ENCODE measurements at regions of chr16 and their contacts with region 1.

Region 1: GRCh38 chr16:79047229-79047983 is 553.1 kb downstream of the MAF start:
- DNase-seq: no peak
- H3K4me3 ChIP-seq: no peak overlapping the region
- H3K27ac ChIP-seq: no peak overlapping the region
- H3K4me1 ChIP-seq: peaks cover 0 to 7% (median 1%) of the 10 kb centered on the region in 4 experiments; a peak in 3 of 7 replicates
- H3K27me3 ChIP-seq: no peaks in the 10 kb centered on the region
- CTCF ChIP-seq: peak in 2 of 3 experiments; percentile 55 to 67; a peak in 3 of 4 replicates
- EP300 ChIP-seq: no peak
- POLR2A ChIP-seq: no peak
- RAD21 ChIP-seq: peak; percentile 44 to 63

Region 2: DNA sequence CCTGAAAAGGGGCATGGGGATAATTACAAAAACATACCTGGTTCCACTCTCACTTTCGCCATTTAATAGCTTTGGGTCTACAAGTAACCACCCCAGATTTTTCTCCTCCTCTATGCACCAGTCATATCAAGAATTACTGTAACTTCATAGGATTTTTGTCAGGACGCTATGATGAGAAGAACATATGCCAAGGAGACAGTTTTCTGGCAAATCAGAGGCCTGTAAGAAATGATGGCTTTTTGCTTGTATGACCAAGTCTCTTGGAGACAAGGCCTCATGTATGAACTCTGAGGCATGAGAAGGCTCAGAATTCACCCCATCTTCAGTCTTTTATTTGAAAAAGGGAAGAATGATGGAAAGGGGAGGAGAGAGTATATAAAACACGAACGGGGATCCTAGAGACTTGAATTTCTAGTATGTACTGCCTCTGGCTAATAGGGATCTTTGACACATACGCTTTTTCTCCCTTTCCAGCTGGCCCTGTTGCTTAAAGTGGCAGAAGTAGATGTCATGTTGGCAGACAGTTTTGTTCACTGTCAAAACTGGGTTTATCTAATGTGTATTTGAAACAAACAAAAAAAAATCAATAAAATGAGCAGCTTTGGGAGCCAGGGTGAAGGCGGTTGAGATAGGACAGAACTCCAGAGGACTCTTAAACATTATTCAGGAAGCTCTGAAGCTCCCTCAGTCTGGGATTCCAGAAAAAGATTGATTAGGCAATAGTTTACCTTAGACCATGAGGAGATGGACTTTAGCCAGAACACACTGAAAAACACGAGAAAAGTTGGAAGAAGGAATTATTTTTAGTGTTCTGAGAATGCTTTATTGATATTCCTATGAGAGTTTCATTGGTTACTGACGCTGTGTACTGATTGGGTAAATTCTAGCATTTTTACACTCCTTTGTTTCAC is 291.4 kb before region 1 on chr16:
- CTCF ChIA-PET with region 1: no interaction called
- POLR2A ChIA-PET with region 1: no interaction called
- DNase-seq: no peak
- H3K4me3 ChIP-seq: no peak overlapping the region
- H3K27ac ChIP-seq: no peak overlapping the region
- H3K4me1 ChIP-seq: peaks cover 0 to 6% (median 1%) of the 10 kb centered on the region in 4 experiments; a peak in 3 of 7 replicates
- H3K27me3 ChIP-seq: no peaks in the 10 kb centered on the region
- CTCF ChIP-seq: no peak
- EP300 ChIP-seq: no peak
- POLR2A ChIP-seq: no peak
- RAD21 ChIP-seq: no peak

Region 3: DNA sequence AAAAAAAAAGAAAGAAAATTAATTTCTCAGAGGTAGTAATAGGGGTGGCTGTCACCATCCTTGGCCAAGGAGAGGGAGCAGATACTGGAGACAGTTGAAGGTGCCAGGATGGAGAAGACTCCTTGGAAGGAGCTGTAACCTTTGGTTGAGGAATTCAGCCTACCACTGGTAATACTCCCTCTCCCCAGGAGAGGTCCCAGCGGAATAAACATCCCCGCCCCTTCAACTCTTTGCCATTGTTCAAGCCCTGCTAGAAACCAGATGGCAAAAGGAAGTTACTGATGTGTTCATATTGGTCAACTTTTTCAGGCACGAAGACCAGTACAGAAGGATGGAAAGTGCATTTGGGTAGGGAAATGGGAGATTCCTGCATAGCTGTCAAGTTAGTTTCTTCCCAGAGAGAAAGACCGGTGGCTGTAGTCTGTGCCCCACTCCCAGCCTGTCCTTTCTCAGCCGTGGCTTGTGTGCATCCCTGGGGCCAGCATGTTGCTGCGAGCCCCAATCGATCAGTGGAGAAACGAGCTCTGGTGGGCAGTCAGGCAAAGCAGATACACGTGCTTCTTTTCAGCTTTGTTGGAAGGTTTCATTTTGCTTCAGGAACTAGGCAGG is 58.9 kb before region 1 on chr16:
- CTCF ChIA-PET with region 1: interaction called, 21 read pairs
- POLR2A ChIA-PET with region 1: no interaction called
- DNase-seq: no peak
- H3K4me3 ChIP-seq: no peak overlapping the region
- H3K27ac ChIP-seq: no peak overlapping the region
- H3K4me1 ChIP-seq: peaks cover 1 to 5% (median 4%) of the 10 kb centered on the region in 4 experiments; a peak in 4 of 7 replicates
- H3K27me3 ChIP-seq: no peaks in the 10 kb centered on the region
- CTCF ChIP-seq: peak in 2 of 3 experiments; percentile 40 to 54; a peak in 3 of 4 replicates
- EP300 ChIP-seq: no peak
- POLR2A ChIP-seq: no peak
- RAD21 ChIP-seq: peak; percentile 63 to 70

Region 4: DNA sequence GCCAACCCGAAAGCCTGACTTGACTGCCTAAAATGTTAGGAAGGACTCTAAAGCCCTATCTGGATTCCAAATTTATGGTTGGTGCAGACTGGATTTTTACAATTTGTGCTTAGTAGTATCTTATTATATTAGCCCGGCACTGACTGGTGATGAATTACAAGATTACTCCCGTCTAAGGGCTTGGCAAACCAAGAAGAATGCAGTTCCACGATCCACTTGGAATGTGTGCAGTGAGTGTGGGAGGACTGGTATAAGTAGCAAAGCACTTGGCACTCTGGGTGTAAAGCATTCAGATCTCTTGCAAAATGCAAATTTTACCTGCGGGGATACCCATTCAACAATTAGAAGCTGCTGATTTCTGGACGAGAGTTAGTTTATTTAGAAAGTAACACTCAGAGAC is 13.8 kb after region 1 on chr16:
- CTCF ChIA-PET with region 1: interaction called, 26 read pairs
- POLR2A ChIA-PET with region 1: no interaction called
- DNase-seq: no peak
- H3K4me3 ChIP-seq: no peak overlapping the region
- H3K27ac ChIP-seq: no peak overlapping the region
- H3K4me1 ChIP-seq: peaks cover 0 to 2% (median 0%) of the 10 kb centered on the region in 4 experiments; a peak in 1 of 7 replicates
- H3K27me3 ChIP-seq: no peaks in the 10 kb centered on the region; a peak in 1 of 7 replicates
- CTCF ChIP-seq: no peak
- EP300 ChIP-seq: no peak
- POLR2A ChIP-seq: no peak
- RAD21 ChIP-seq: no peak

Region 5: GRCh38 chr16:79150632-79151310 is 103.4 kb after region 1 on chr16:
- CTCF ChIA-PET with region 1: no interaction called
- POLR2A ChIA-PET with region 1: no interaction called
- DNase-seq: no peak
- H3K4me3 ChIP-seq: no peak overlapping the region
- H3K27ac ChIP-seq: no peak overlapping the region
- H3K4me1 ChIP-seq: no peaks in the 10 kb centered on the region
- H3K27me3 ChIP-seq: no peaks in the 10 kb centered on the region
- CTCF ChIP-seq: no peak
- EP300 ChIP-seq: no peak
- POLR2A ChIP-seq: no peak
- RAD21 ChIP-seq: no peak

Measured in H1 (cell line).